Activated naive CD4-positive, alpha-beta T cell treated with anti-CD3 and anti-CD28 coated beads for 36 hours (primary cell): ENCODE measurements at regions of chr6 and their contacts with region 1.

Region 1: GRCh38 chr6:32570363-32570905 is 19.2 kb downstream of the HLA-DRB1 start:
- DNase-seq: no peak
- H3K4me3 Mint-ChIP-seq: no peak overlapping the region
- H3K27ac Mint-ChIP-seq: no peak overlapping the region
- H3K4me1 Mint-ChIP-seq: peaks cover 3% of the 10 kb centered on the region
- H3K27me3 Mint-ChIP-seq: peaks cover 5% of the 10 kb centered on the region

Region 2: DNA sequence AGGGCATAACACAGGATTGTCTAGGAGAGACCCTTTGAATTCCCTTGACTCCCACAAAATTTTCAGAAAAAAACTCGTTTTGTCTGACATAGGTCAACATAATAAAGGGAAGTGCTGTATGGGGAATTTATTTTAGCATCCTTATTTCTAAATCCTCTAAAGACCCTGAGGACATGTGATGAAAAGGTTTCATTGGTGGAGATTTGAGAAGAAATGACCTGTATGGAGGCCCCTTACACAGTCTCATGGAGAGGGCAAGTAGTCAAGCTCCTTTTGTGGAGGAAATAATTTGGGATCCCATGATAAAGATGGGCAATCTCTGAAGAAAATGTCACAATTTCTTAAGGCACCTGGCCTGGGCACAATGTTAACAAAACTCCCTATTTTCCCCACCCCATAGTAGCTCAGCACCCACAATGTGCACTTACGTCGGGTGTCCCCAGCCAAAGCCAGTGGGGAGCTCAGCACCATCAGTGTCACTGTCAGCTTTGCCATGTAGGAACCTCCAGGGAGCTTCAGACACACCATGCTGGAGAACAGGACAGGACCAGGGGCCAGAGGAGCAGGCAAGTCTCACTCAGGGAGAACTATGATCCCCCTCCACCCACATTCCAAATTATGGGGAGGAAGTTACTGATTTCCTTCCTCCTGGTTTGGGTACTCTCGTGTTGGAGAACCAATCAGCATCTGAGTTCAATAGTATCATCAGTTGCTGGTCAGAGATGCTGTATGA is 40.6 kb before region 1 on chr6 and contains the start of gene HLA-DRB5:
- CTCF ChIA-PET with region 1: no interaction called
- intact Hi-C with region 1: loop called (anchors 5 kb)
- DNase-seq: peak; percentile 3
- H3K4me3 Mint-ChIP-seq: peak within 1 kb of the TSS; percentile 38
- H3K27ac Mint-ChIP-seq: no peak within 1 kb of the TSS
- H3K4me1 Mint-ChIP-seq: no peaks in the 10 kb centered on the region
- H3K27me3 Mint-ChIP-seq: no peaks in the 10 kb centered on the region
- total RNA-seq, gene HLA-DRB5: 0.33 to 0.42 TPM

Region 3: DNA sequence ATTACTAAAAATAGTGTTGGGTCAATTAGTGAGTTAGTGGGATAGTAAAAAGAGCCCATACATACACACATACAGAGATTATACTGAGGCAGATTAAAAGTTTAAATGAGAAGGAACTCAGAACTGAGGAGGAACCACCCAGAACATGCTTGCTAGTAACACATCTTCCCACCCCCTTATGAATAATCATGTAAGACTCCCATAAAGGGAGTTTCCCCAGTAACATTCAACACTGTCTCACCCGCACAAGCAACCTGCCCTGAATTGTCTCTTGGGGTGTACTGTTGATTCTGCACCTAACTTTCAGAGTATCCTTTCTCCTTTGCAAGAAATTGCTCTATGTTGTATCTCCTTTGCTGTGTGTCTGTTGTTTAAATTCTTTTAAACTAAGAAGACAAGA is 204.0 kb after region 1 on chr6:
- CTCF ChIA-PET with region 1: no interaction called
- intact Hi-C with region 1: no loop called
- DNase-seq: no peak
- H3K4me3 Mint-ChIP-seq: no peak overlapping the region
- H3K27ac Mint-ChIP-seq: no peak overlapping the region
- H3K4me1 Mint-ChIP-seq: no peaks in the 10 kb centered on the region
- H3K27me3 Mint-ChIP-seq: peaks cover 16% of the 10 kb centered on the region